Right ventricle myocardium inferior (tissue), 1 donor: ENCODE measurements at regions of chr17 and their contacts with region 1.

Region 1: DNA sequence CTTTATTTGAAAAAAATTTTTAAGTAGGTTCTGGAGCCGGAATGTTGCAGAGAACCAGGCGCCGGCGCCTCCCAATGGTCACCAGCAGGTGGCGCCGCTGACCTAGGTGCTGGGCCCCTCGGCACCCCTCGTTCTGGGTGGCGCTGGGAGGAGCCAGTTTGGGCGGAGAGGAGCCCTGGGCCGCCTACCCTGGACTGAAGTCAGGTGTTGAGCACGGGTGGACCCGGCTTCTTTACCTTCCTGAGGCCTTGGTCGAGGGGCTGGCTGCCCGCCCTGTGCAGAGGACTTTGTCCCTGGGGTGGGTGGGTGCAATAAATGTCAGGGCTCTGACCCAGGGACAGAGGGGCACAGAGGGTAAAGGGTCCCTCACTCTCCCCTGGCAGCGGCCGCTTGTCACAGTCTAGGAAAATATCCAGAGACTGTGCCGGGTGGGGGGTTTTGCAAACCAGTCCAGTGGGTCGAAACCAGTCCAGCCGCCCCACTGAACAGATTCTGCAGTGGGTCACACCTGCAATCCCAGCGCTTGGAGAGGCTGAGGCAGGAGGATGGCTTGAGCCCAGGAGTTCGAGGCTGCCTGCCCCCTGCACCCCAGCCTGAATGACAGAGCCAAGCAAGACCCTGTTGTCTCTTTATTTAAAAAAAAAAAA is 30.1 kb upstream of the TNFRSF13B start:
- DNase-seq: peak; percentile 93
- ATAC-seq: peak; percentile 82

Region 2: GRCh38 chr17:16945663-16946218 is 56.3 kb before region 1 on chr17:
- intact Hi-C with region 1: no loop called
- DNase-seq: no peak
- ATAC-seq: no peak

Region 3: GRCh38 chr17:17151962-17152361 is 150.0 kb after region 1 on chr17:
- intact Hi-C with region 1: loop called (anchors 5 kb)
- DNase-seq: peak; percentile 94
- ATAC-seq: peak; percentile 91

Region 4: DNA sequence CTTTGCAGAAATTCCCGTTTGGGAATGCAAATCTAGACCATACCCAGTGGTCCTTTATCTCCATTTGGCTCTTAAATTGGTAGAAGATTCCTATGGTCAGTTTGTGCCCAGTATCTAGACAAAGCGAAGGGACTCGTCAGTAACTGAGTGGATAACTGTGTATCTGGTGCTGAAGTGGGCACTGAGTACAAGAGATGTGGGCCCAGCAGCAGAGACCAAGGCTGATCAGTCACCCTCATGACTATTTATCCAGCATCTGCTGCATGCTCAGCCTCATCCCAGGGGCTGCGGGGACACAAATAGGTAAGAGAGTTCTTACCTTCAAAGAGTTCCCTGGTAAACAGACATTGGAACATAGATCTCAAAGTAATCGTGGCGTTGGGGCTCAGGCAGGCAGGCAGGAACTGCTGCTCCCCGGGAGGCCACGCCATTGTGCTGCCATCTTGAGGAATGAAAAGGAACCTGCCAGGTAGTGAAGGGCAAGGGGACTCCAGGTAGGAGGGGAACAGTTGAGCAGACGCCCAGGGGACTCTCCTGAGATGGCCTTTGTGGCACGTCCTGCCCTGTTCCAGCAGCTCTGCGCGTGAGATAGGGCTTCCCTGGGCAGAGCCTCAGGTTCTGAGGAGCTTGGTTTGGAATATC is 311.5 kb after region 1 on chr17:
- intact Hi-C with region 1: loop called (anchors 2 kb)
- DNase-seq: no peak
- ATAC-seq: peak; percentile 42